Vagina (tissue), 2 donors: ENCODE measurements at regions of chr1 and their contacts with region 1.

Region 1: DNA sequence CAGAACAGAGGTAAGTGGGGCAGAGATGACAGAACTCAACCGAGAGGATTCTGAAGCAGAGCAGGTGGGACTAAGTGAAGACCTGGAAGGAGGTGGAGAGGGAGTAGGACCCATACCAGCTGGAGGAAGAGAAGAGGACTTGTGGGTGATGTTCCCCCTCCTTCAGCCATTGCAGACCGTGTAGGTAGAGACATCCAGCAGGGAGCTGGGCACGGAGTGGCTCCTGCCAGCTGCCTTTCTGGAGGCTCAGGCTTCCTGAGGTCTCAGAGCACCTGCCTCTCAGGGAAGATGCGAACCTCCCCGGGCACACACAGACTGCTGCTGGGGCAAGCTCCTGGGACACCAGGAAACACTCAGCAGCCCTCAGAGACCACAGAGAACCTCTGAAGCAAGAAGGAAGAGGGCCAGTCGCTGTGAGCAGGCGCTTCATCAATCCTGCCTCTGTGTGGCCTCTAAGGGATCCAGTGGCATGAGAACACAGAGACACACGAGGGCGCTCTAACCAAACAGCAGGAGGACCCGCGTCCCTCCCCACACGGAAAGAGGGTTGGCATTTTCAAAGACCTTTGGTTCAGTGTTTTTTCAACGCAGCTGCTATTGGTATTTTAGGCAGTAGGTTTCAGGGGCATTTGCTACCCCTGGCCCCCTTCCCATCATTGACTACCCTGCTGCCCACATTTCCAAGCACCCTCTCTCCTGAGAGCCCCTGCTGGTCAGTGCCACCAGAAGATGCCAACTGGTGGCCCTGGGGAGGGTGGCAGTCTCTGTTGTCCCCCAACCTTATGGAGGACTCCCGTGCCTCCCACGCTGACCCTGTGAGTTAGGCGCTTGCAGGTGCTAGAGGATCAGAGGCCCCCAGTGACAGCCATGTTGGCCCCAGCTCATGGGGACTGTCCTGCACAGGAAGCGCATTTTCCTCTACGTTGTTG is 89.6 kb upstream of the EDN2 start:
- DNase-seq: no peak
- H3K4me3 ChIP-seq: no peak overlapping the region
- H3K27ac ChIP-seq: no peak overlapping the region
- H3K4me1 ChIP-seq: no peaks in the 10 kb centered on the region
- H3K27me3 ChIP-seq: no peaks in the 10 kb centered on the region
- CTCF ChIP-seq: peak; percentile 56 to 88 (median 84)
- POLR2A ChIP-seq: no peak

Region 2: GRCh38 chr1:41802532-41803501 is 228.8 kb after region 1 on chr1:
- intact Hi-C with region 1: loop called (anchors 10 kb)
- DNase-seq: no peak
- H3K4me3 ChIP-seq: no peak overlapping the region
- H3K27ac ChIP-seq: no peak overlapping the region
- H3K4me1 ChIP-seq: peaks cover 40% of the 10 kb centered on the region
- H3K27me3 ChIP-seq: no peaks in the 10 kb centered on the region
- CTCF ChIP-seq: no peak
- POLR2A ChIP-seq: no peak

Region 3: DNA sequence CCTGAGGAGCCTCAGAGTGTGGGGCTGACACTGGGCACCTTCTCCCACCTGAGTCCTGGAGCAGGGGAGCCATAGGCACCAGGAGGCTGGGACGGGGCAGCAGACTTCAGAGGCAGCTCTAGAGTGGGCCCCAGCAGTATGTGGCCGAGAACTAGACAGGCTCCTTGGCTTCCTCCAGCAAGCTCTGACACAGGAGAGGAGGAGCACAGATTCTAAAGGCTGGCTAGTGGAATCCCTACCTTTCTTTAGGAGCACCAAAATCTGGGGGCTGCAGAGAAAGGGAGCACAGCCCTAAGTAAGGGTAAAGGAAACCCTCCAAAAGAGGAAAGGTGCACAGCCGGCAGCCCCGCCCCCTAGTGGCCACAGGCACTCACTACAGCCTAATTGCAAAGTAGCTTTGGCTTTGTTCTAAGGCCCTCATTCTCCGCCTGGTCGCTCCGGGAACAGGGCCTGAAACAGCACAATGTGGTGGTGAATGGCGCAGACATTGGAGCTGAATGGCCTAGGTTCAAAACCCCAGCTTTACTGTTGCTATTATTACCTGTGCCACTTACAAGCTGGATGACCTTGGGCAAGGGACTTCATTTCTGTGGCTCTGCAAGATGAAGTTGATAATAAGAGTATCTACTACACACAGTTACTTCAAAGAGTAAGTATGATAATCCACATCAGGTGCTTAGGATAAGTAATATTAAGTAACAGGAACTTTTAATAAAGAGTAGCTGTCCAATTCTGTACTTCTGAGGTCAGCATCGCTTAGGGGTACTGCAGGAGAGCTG is 599.3 kb after region 1 on chr1:
- intact Hi-C with region 1: loop called (anchors 10 kb)
- DNase-seq: no peak
- H3K4me3 ChIP-seq: no peak overlapping the region
- H3K27ac ChIP-seq: peak overlapping the region; percentile 17
- H3K4me1 ChIP-seq: peaks cover 63% of the 10 kb centered on the region
- H3K27me3 ChIP-seq: no peaks in the 10 kb centered on the region
- CTCF ChIP-seq: peak; percentile 65 to 85 (median 80)
- POLR2A ChIP-seq: no peak